A549 (cell line): ENCODE measurements at regions of chrX and their contacts with region 1.

Region 1: DNA sequence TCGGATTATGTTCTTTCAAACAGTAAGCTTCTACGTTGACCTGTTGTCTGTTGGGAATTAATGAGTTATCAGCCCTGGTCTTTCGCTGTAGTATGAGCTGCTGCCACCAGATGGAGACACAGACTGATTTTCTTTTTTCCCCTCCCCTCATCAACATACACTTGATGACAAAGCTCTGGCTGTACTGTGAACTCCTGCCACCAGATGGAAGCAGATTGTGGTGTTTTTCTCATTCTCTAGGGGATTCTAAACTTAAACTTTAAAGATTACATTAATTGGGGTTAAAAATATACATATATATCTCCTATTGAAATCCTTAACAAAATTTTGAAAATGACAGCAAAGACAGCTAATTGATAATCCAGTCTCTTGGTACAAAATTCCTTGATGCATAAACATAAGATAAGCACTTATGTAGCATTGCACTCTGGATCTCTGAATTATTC is 44.8 kb downstream of the SMS start:
- DNase-seq: peak; percentile 76 to 77
- ATAC-seq: peak; percentile 93 to 95
- H3K4me3 ChIP-seq: no peak overlapping the region
- H3K27ac ChIP-seq: no peak overlapping the region
- H3K4me1 ChIP-seq: peaks cover 13% of the 10 kb centered on the region
- CTCF ChIP-seq: peak; percentile 88
- EP300 ChIP-seq: no peak
- POLR2A ChIP-seq: no peak
- RAD21 ChIP-seq: peak; percentile 82 to 83

Region 2: DNA sequence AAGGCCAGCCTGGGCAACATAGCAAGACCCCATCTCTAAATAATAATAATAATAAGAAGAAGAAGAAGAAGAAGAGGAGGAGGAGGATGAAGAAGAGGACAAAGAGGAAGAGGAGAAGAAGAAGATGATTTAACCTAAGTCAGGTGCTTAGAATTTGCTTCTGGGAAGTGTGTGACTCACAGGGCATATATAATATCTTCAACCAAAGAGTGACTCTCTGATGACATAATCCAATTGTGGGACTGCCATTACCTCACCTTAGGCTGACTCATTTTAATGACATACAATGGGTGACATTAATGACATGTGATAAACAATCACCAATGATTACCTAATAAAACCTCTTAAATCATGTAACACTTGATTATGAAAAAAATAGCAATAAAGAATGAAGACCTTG is 178.7 kb before region 1 on chrX:
- CTCF ChIA-PET with region 1: no interaction called
- POLR2A ChIA-PET with region 1: no interaction called
- DNase-seq: peak in 1 of 2 experiments; percentile 6
- ATAC-seq: no peak
- H3K4me3 ChIP-seq: no peak overlapping the region
- H3K27ac ChIP-seq: no peak overlapping the region
- H3K4me1 ChIP-seq: no peaks in the 10 kb centered on the region
- CTCF ChIP-seq: no peak
- EP300 ChIP-seq: no peak
- POLR2A ChIP-seq: no peak
- RAD21 ChIP-seq: no peak

Region 3: GRCh38 chrX:21883258-21883657 is 102.1 kb before region 1 on chrX:
- CTCF ChIA-PET with region 1: no interaction called
- POLR2A ChIA-PET with region 1: no interaction called
- DNase-seq: peak in 1 of 2 experiments; percentile 0
- ATAC-seq: no peak
- H3K4me3 ChIP-seq: no peak overlapping the region
- H3K27ac ChIP-seq: no peak overlapping the region
- H3K4me1 ChIP-seq: 0 out of 3 replicates have a peak, but pooled peaks cover 3% of the 10 kb centered on the region
- CTCF ChIP-seq: no peak
- EP300 ChIP-seq: no peak
- POLR2A ChIP-seq: no peak
- RAD21 ChIP-seq: no peak

Region 4: DNA sequence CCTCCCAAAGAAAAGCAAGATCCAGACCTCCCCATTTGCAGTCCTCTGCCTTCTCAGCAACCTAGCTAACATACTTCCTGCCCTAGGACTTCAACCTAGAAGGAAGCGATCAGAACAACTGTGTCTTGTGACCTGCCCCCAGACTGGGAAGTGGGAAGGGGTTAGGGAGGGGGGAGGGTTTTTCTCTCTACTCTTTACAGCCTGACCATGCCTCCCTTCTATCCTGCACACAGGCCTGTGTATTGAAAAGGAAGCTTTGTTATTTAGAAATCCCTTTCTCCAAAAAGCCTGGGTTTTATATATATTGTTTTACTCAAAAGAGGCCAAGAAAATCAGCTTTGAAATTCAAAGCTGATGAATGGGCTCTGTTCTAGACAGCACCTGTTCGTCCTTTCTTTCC is 80.1 kb before region 1 on chrX:
- CTCF ChIA-PET with region 1: no interaction called
- POLR2A ChIA-PET with region 1: no interaction called
- DNase-seq: no peak
- ATAC-seq: no peak
- H3K4me3 ChIP-seq: no peak overlapping the region
- H3K27ac ChIP-seq: no peak overlapping the region
- H3K4me1 ChIP-seq: no peaks in the 10 kb centered on the region
- CTCF ChIP-seq: no peak
- EP300 ChIP-seq: no peak
- POLR2A ChIP-seq: no peak
- RAD21 ChIP-seq: no peak

Region 5: DNA sequence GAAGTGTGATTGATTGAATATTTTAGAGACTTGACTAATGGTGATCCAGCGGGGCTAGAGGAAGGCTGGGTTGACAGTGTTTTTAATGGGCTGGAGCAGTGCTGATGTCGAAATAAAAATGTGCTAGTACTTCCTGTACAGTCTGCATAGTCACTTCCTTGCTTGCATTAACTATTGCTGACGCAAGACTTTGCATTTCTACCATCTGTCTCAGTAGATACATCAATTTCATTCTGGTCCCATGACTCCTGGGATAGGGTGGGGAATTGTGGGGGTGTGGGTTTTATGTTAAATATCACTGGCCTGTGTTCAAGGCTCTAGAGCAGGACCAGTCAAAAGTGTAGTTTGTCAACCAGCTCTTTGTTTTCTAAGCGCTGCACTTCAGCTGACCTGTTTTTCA is 11.5 kb after region 1 on chrX:
- CTCF ChIA-PET with region 1: interaction called, 11 read pairs
- POLR2A ChIA-PET with region 1: no interaction called
- DNase-seq: peak in 1 of 2 experiments; percentile 41
- ATAC-seq: peak; percentile 66 to 76; a peak in 4 of 6 replicates
- H3K4me3 ChIP-seq: no peak overlapping the region
- H3K27ac ChIP-seq: peak overlapping the region; percentile 50 to 63; a peak in 2 of 6 replicates
- H3K4me1 ChIP-seq: peaks cover 9% of the 10 kb centered on the region; the same call in 2 of the 3 replicates
- CTCF ChIP-seq: no peak
- EP300 ChIP-seq: no peak
- POLR2A ChIP-seq: no peak
- RAD21 ChIP-seq: no peak

Region 6: GRCh38 chrX:22192417-22193060 is 207.2 kb after region 1 on chrX:
- CTCF ChIA-PET with region 1: interaction called, 15 read pairs
- POLR2A ChIA-PET with region 1: no interaction called
- DNase-seq: peak; percentile 25 to 75
- ATAC-seq: peak; percentile 95 to 98
- H3K4me3 ChIP-seq: no peak overlapping the region
- H3K27ac ChIP-seq: peak overlapping the region in 1 of 2 experiments; percentile 70; a peak in 3 of 6 replicates
- H3K4me1 ChIP-seq: no peaks in the 10 kb centered on the region
- CTCF ChIP-seq: peak; percentile 66
- EP300 ChIP-seq: no peak
- POLR2A ChIP-seq: no peak
- RAD21 ChIP-seq: peak; percentile 63 to 66

Region 7: DNA sequence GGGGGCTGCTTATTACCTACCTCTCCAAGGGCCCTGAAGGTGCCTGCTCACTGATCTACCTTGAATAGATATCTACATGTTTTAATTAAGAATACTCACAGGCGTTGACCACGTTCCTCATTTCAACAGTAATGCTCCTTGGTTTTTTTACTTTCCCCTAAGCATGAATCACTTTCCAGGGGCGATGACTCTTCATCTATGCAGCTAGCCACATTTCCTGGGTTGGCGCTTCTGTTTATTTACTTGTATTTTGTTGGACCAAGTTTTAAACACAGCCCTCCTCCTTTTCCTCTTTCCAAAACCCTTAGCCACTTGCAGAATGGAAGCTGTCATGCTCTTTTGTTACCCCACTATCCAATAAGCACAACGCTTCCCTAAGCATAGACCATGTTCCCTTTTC is 338.2 kb after region 1 on chrX:
- CTCF ChIA-PET with region 1: no interaction called
- POLR2A ChIA-PET with region 1: no interaction called
- DNase-seq: no peak
- ATAC-seq: no peak
- H3K4me3 ChIP-seq: no peak overlapping the region
- H3K27ac ChIP-seq: no peak overlapping the region
- H3K4me1 ChIP-seq: no peaks in the 10 kb centered on the region
- CTCF ChIP-seq: no peak
- EP300 ChIP-seq: no peak
- POLR2A ChIP-seq: no peak
- RAD21 ChIP-seq: no peak

Region 8: GRCh38 chrX:22748093-22748999 is 763.0 kb after region 1 on chrX:
- CTCF ChIA-PET with region 1: interaction called, 11 read pairs
- POLR2A ChIA-PET with region 1: no interaction called
- DNase-seq: peak; percentile 6 to 38
- ATAC-seq: peak; percentile 82 to 89
- H3K4me3 ChIP-seq: no peak overlapping the region
- H3K27ac ChIP-seq: no peak overlapping the region
- H3K4me1 ChIP-seq: no peaks in the 10 kb centered on the region
- CTCF ChIP-seq: peak; percentile 57
- EP300 ChIP-seq: no peak
- POLR2A ChIP-seq: no peak
- RAD21 ChIP-seq: peak; percentile 40 to 51; a peak in 3 of 5 replicates